ENCODE measurements at regions of chr16 and their contacts with region 1.

Region 1: DNA sequence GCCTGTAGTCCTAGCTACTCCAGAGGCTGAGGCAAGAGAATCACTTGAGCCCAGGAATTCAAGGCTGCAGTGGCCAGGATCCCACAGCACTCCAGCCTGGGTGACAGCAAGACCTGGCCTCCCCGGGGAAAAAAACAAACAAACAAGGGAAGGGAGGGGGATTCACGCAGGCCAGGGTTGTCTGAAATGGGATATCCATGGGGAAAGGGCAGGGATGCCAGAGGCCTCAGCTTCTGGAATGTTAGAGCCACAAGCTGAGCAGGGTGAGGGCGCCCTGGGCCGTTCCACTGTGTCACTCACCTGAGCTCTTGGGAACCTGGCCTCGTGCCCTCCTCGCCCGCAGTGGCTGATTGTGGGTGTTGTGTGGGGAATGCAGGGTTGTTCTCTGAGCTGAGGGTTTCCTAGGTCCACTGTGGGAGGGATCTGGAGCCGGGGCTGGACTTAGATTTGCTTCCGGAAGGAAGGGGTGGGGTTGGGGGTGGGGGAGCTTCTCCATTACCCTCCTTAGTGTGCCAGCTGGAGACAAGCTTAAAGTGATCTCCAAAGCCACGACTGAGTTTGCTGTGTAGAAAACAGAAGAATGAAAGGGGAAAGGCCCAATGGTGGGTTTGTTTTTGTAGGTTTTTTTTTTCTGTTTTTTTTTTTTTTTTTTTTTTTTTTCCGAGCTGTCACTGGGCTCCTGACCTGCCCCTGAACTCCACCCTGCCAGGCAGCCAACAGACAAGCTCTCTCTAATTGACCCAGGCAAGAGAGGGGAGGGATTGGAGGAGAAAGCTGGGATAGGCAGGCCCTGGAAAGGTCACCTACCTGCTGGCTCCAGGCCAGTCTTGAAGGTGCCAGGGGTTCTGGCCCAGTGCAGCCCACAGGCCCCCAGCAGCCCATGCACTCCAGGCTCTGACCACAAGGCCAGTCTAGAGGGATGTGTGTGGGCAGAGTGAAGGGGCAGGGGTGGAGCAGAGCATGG is at the start of gene SULT1A1:
- DNase-seq: peak; percentile 63 to 84 (median 84)
- ATAC-seq: peak; percentile 82 to 87
- H3K4me3 ChIP-seq: peak within 1 kb of the TSS; percentile 15
- H3K27ac ChIP-seq: peak within 1 kb of the TSS; percentile 55
- H3K4me1 ChIP-seq: peaks cover 6% of the 10 kb centered on the region
- H3K27me3 ChIP-seq: no peaks in the 10 kb centered on the region
- total RNA-seq, gene SULT1A1: 18.8 to 26.9 (median 22.0) TPM

Region 2: DNA sequence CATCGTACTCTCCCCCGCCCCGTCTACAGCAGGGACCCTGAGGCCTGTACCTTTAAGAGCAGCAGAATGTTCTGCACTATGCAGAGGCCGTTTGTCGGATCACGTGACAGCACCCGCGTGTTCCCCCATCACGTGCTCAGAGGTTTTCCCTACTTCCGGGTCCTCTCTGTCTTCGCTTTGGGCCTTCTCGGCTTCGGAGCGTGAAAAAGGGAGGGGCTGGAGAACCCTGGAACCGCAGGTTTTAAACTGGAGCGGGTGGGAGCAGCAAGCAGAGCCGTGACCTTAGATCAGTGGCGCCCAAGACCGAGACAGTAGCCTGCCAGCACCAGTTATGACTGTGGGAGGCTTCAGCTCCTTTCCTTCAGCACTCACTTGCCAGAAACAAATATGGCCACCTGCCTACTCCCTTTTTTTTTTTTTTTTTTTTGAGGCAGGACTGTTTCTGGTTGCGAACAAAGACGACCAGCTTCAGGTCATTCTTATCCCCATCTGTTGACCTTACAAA is 117.9 kb before region 1 on chr16 and contains the start of gene CLN3:
- intact Hi-C with region 1: loop called in 1 of 4 experiments (anchors 10 kb)
- DNase-seq: peak; percentile 92 to 95 (median 95)
- ATAC-seq: peak; percentile 97
- H3K4me3 ChIP-seq: peak within 1 kb of the TSS; percentile 96
- H3K27ac ChIP-seq: peak within 1 kb of the TSS; percentile 99
- H3K4me1 ChIP-seq: no peaks in the 10 kb centered on the region
- H3K27me3 ChIP-seq: no peaks in the 10 kb centered on the region
- total RNA-seq, gene CLN3: 10.0 to 17.9 (median 13.9) TPM

Region 3: GRCh38 chr16:28524681-28525171 is 85.2 kb before region 1 on chr16:
- intact Hi-C with region 1: no loop called
- DNase-seq: no peak
- ATAC-seq: peak in 1 of 2 donors; percentile 60
- H3K4me3 ChIP-seq: no peak overlapping the region
- H3K27ac ChIP-seq: no peak overlapping the region
- H3K4me1 ChIP-seq: peaks cover 2% of the 10 kb centered on the region
- H3K27me3 ChIP-seq: no peaks in the 10 kb centered on the region

Region 4: GRCh38 chr16:28569021-28569420 is 40.9 kb before region 1 on chr16:
- intact Hi-C with region 1: no loop called
- DNase-seq: no peak
- ATAC-seq: no peak
- H3K4me3 ChIP-seq: no peak overlapping the region
- H3K27ac ChIP-seq: no peak overlapping the region
- H3K4me1 ChIP-seq: peaks cover 11% of the 10 kb centered on the region
- H3K27me3 ChIP-seq: no peaks in the 10 kb centered on the region